ENCODE measurements at regions of chr14 and their contacts with region 1.

Region 1: GRCh38 chr14:50773632-50774541 is 57.1 kb downstream of the NIN start:
- DNase-seq: no peak
- H3K4me3 ChIP-seq: no peak overlapping the region
- CTCF ChIP-seq: peak; percentile 84

Region 2: DNA sequence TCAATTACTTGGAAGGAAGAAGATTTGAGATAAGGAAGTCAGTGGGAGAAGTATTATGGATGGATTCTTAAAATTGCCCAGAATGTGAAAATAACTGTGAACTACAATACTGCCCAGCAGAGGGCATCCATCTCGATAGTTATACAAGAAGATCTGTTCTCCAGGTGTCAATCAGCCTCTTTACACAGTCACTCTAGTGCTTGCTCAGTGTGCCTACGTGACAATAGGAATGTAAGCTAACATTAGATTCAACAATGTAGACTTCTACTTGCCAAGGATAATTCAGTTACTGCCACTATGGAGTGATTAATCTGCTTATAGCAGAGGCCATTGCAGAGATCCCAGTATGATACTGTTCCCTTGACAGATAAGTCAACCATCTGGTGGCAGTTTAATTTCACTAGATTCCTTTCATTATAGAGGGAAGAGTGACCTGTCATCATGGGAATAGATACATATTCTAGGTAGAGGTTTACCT is 230.9 kb before region 1 on chr14:
- CTCF ChIA-PET with region 1: interaction called, 191 read pairs
- POLR2A ChIA-PET with region 1: interaction called, 3 read pairs
- DNase-seq: no peak
- H3K4me3 ChIP-seq: no peak overlapping the region
- CTCF ChIP-seq: peak; percentile 47

Region 3: DNA sequence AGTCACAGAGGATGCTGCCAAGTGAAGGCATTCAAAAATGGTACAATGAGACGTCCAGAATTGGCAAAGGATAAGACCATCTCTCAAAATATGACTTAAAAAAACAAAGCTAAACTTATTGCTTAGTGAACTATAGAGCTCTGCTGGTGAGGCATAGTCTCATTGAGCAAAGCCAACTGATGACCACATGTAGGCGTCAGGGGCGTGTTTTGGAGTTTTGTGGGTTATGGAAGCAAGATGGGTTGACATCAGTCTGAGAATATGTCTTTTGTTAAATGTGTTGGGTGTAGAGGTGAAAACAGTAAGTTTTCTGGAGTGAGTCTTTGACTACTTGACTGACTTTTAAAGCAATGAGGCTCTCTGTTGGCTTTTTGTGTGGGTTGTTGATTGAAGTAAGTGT is 166.7 kb before region 1 on chr14:
- CTCF ChIA-PET with region 1: interaction called, 187 read pairs
- POLR2A ChIA-PET with region 1: no interaction called
- DNase-seq: peak; percentile 65
- H3K4me3 ChIP-seq: no peak overlapping the region
- CTCF ChIP-seq: no peak

Region 4: GRCh38 chr14:50649691-50650090 is 124.2 kb before region 1 on chr14:
- CTCF ChIA-PET with region 1: interaction called, 11 read pairs
- POLR2A ChIA-PET with region 1: no interaction called
- DNase-seq: no peak
- H3K4me3 ChIP-seq: no peak overlapping the region
- CTCF ChIP-seq: no peak

Region 5: DNA sequence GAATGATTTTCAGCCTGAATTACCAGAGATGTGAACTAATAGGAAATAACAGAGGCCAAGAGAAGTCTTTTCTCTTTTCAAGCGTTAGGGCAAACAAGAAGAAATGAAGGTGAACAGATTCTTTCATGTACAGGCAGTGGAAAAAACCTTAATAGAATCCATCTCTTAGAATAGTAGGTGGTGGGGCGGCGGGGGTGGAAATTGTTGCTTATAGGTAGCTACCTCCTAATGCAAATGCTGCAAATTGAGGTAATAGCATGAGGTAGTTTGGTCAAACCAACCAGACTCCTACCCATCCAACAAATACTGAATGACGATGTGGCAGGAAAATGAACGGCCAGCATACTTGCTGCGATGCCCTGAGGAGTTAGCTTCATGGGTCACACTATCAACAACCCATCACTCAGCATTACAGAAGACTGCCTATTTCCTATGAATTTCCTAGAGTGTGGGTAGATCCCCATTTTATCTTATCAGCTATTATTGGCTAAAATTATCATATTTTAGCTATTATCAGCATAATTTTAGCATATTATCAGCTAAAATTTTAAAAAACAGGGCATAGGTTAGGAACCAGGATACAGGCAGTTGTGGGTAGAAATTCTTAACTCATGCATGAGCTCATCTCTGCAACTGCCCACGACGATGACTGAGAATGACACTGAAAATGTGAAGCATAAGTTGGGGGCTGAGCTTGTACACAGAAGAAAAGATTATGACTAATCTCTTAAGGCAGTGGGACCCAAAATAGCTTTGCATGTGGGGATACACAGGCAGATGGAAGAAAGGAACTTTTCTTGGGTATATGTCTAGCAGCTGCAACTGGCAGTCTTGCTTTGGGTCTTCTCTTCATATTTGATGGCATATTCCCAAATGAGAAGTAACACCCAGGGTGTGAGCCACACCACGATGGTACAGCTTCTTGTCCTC is 11.6 kb before region 1 on chr14:
- CTCF ChIA-PET with region 1: interaction called, 194 read pairs
- POLR2A ChIA-PET with region 1: interaction called, 18 read pairs
- DNase-seq: peak; percentile 64
- H3K4me3 ChIP-seq: no peak overlapping the region
- CTCF ChIP-seq: no peak

Region 6: DNA sequence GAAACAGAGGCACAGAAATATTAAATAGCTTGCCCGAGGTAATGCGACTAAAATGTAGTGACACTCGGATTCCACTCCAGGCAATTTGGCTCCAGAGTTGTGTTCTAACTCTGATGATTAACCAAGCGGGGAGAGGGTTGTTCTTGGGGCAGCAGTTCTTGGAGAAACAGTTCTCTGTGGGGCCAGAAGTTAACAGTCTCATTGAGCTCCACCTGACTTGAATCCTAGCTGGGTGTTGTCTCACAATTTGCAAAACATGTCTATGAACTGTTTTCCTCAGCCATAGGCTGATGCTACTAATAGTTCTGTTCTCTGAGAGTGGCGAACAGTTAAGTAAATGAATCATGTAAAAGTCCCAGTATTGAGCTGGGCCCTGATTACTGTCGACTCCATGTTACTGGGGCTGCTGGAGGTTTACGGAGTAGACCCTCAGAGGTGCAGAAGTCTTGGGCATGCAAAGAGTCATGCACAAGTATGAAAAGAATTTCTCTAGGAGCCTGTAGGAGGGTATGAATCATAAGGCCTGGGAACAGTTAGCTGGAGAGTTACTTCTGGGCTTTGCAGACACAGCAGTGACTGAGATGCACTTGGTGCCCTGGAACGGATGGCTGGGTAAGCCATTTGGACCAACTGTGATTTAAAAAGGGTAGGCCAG is 72.5 kb after region 1 on chr14:
- CTCF ChIA-PET with region 1: interaction called, 11 read pairs
- POLR2A ChIA-PET with region 1: no interaction called
- DNase-seq: peak; percentile 83
- H3K4me3 ChIP-seq: no peak overlapping the region
- CTCF ChIP-seq: no peak